Ascending aorta (tissue), 2 donors: ENCODE measurements at regions of chr3 and their contacts with region 1.

Region 1: DNA sequence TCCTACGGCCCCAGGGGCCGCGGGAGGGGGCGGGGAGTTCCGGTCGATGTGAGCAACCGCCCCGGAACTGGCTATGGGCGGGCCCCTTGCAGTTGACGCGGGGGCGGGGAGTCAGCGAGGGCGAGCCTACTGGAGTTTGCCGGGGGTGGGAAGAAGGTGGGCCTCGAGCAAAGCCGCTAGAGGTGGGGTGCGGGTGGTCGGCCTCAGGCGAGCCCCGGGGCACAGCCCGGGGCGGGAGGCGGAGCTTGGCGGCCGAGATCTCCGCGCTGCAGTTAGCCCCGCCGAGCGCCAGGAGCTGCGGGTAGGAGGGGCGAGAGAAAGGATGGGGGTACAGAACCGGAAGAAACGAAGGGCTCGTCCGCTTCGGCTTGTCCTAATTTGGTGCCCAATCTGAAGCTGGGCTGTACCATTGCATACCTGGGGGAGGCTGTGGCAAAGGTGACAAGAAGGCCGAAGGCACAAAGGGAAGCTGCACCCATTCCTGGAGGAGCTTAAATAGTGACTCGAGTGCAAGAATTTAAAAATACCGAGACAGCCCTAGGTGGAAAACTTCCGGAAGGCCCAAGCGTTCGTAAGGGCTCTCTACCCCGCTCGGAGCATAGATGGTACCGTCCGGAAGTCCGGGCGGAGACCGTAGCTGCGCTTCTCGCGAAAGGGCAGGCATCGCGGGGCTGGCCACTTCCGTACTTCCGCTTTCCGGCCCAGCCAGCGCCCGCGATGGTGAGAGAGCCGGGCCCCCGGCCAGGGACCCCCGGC is at the starts of genes ARPC4 and TADA3:
- DNase-seq: peak; percentile 71 to 96
- H3K4me3 ChIP-seq: peak within 1 kb of the TSS; percentile 75 to 84
- H3K27ac ChIP-seq: peak within 1 kb of the TSS; percentile 95 to 98
- H3K4me1 ChIP-seq: peaks cover 6 to 22% of the 10 kb centered on the region in 2 donors
- H3K27me3 ChIP-seq: no peaks in the 10 kb centered on the region
- CTCF ChIP-seq: peak in 2 of 3 experiments; percentile 7 to 28
- total RNA-seq, gene ARPC4: 160 TPM
- total RNA-seq, gene TADA3: 106 TPM

Region 2: GRCh38 chr3:9590282-9590791 is 202.2 kb before region 1 on chr3:
- intact Hi-C with region 1: no loop called
- DNase-seq: no peak
- H3K4me3 ChIP-seq: no peak overlapping the region
- H3K27ac ChIP-seq: no peak overlapping the region
- H3K4me1 ChIP-seq: no peaks in the 10 kb centered on the region
- H3K27me3 ChIP-seq: no peaks in the 10 kb centered on the region
- CTCF ChIP-seq: no peak

Region 3: DNA sequence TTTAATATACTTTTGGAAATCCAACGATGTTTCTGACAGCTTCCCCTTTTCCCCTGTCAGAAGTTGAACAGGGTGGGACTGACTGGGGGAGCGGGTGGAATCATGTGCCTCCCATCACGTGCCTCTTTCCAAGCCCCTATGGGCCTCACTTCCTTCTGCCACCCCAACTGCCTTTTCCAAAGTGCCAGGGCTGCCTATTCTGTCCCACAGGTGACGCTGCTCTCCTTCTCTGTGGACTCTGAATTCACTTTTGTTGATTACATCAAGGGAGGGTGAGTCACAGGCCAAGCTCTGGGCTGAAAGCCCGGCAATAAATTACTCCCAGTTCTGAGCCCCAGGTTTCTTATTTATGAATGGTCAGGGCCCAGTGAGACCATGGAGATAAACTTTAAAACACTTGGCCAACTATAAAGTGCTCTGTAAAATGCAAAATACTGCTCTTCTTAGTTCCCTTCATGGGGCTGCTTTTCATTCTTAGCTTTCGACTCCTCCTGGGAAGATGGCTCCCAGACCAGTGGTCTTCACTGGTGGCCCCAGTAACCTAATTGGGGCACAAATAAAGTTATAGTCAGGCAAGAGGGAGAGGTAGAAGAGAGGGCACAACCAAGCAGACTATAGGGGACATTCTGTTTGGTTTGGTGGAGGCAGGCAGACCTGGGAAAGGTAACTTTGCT is 76.7 kb before region 1 on chr3:
- intact Hi-C with region 1: loop called (anchors 2 kb)
- DNase-seq: peak; percentile 66 to 93
- H3K4me3 ChIP-seq: no peak overlapping the region
- H3K27ac ChIP-seq: peak overlapping the region; percentile 73 to 86
- H3K4me1 ChIP-seq: peaks cover 3 to 4% of the 10 kb centered on the region in 2 donors
- H3K27me3 ChIP-seq: no peaks in the 10 kb centered on the region
- CTCF ChIP-seq: peak; percentile 85 to 89 (median 87)

Region 4: DNA sequence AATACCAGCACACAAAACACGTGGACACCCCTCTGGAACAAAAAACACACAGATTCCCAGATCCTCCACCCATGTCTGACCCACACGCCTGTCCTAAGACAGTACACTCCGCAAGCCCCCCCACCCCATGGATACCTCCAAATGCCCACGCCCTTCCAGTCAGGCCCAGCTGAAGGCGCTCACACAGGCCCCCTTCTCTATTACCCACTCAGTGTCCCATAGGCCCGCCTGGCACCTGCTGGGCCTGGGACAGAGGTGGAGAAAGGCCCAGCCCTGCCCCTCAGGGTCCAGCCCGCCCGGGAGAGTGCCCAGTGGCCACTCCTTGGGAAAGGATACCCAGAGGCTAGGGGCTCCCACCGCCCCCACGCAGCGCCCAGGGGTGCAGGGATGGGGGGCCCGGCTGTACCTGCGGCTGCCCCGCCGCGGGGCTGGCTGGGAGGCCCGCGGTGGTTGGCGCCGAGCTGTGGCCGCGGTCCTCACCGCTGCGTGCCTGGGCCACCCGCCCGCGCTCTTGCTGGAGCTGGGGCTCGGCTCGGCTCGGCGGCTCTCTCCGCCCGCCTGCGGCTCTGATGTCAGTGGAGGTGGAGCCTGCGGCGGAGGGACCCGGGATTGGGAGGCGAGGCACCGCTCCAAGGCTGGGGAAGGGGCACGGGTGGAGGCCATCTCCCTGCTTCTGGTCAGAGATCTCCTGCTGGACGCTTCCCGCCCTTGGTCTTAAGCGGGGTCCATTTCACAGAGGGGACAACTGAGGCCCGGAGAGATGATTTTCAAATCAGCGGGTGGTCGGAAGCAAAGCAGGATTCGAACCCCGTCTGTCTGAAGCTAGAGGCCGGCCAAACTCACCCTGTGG is 22.9 kb before region 1 on chr3 and contains the start of gene CAMK1:
- intact Hi-C with region 1: loop called (anchors 1 kb)
- DNase-seq: peak; percentile 43 to 91
- H3K4me3 ChIP-seq: peak within 1 kb of the TSS; percentile 73 to 92
- H3K27ac ChIP-seq: peak within 1 kb of the TSS; percentile 81 to 88
- H3K4me1 ChIP-seq: peaks cover 0 to 25% of the 10 kb centered on the region in 2 donors
- H3K27me3 ChIP-seq: no peaks in the 10 kb centered on the region
- CTCF ChIP-seq: no peak
- total RNA-seq, gene CAMK1: 82.9 TPM

Region 5: DNA sequence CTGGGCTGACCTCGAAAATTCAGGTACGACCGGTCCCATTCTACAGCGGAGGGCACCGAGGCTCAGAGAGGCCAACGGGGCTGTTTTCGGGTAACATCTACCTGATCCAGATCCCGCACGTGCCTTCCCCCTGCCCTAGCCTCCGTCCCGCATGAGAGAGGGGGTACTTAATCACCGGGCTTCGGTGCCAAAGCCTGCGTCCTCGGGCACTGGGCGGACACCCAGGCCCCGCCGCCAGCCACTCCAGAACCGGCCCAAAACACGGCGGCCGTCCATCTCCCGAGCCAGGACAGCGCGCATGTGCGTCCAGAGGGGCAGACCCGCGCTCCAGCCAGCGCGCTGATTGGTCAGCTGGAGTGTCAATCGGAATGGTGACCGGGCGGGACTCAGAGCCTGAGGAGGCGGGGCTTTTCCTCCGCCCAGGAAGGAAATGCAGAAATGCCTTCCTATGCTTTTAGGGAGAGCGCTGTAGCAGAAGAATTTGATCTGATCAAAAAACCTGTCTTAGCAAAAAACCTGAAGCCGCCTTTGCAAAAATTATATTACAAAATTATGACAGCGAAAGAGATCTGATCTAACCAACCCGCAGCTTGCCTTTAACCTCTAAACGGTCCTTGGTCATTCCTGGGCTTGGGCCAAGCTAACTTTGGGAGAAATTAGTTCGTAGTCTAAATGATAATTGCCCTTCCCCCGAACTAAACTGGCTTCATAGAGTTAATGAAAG is 51.3 kb after region 1 on chr3 and contains the start of gene RPUSD3:
- intact Hi-C with region 1: loop called (anchors 1 kb)
- DNase-seq: peak; percentile 89 to 99
- H3K4me3 ChIP-seq: peak within 1 kb of the TSS; percentile 76 to 77
- H3K27ac ChIP-seq: peak within 1 kb of the TSS; percentile 80 to 84
- H3K4me1 ChIP-seq: peaks cover 4 to 9% of the 10 kb centered on the region in 2 donors
- H3K27me3 ChIP-seq: no peaks in the 10 kb centered on the region
- CTCF ChIP-seq: no peak
- total RNA-seq, gene RPUSD3: 30.7 TPM

Region 6: GRCh38 chr3:9932843-9933560 is 140.4 kb after region 1 on chr3:
- intact Hi-C with region 1: loop called (anchors 2 kb)
- DNase-seq: peak; percentile 53 to 96
- H3K4me3 ChIP-seq: peak overlapping the region; percentile 82 to 96
- H3K27ac ChIP-seq: peak overlapping the region; percentile 97 to 99
- H3K4me1 ChIP-seq: peaks cover 11 to 21% of the 10 kb centered on the region in 2 donors
- H3K27me3 ChIP-seq: no peaks in the 10 kb centered on the region
- CTCF ChIP-seq: peak; percentile 84 to 93 (median 89)

Region 7: DNA sequence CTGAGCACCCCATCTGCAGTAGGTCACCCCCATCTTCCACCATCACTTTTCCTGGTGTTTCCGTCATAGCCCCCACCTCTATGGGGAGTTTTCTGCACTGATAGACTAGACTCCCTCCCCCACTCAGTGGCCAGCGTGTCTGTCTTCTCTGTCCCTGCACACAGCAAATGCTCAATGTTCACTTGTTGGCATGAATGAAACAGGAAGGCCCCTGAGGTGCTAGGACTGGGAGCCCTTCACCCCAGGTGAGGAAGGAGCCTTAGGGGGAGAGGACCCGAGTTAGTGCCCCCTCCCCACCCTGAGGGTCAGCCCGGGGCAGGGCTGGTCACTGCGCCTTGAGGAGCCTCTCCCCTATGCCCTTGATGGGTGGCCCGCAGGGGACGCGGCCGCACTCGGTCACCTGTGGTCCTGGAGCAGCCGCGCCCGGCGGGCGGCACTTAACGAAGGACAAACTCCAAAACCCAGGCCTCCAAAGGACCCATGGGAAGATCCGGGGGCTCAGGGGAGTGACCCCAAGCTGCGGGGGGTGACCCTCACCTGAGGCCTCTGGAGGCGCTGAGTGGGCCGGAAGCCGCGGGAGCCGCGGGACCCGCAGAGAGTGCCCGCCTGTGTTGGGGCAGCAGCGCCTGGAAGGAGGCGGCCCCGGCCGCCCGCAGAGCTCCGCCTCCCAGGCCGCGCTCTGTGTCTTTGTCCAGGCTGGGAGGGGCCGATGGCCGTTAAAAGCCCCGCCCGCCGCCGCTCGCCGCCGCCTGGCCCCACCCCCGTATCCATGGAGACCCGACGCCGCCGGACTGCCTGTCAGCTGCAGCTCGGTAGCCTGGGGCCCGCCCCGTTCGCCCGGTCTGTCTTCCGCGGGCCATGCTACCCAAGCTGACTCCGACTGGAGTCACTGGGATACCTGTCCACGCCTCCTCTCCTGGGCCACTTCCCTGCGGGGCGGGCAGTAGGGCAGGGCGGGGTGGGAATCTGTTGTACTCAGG is 218.2 kb after region 1 on chr3:
- intact Hi-C with region 1: loop called (anchors 2 kb)
- DNase-seq: peak; percentile 90 to 98
- H3K4me3 ChIP-seq: peak overlapping the region; percentile 60 to 81
- H3K27ac ChIP-seq: peak overlapping the region; percentile 52 to 78
- H3K4me1 ChIP-seq: peaks cover 9 to 33% of the 10 kb centered on the region in 2 donors
- H3K27me3 ChIP-seq: no peaks in the 10 kb centered on the region
- CTCF ChIP-seq: peak in 1 of 3 experiments; percentile 4